Activated T-helper 2 cell treated with anti-CD3 and anti-CD28 coated beads, Interferon-gamma antibody, Interleukin-2, Interleukin-4, amounts not matched to agents 10 μg/mL and 5 μg/mL and 100 μg/mL, durations not matched to agents 14 hours and 24 hours and 36 hours (primary cell): ENCODE measurements at regions of chr10 and their contacts with region 1.

Region 1: DNA sequence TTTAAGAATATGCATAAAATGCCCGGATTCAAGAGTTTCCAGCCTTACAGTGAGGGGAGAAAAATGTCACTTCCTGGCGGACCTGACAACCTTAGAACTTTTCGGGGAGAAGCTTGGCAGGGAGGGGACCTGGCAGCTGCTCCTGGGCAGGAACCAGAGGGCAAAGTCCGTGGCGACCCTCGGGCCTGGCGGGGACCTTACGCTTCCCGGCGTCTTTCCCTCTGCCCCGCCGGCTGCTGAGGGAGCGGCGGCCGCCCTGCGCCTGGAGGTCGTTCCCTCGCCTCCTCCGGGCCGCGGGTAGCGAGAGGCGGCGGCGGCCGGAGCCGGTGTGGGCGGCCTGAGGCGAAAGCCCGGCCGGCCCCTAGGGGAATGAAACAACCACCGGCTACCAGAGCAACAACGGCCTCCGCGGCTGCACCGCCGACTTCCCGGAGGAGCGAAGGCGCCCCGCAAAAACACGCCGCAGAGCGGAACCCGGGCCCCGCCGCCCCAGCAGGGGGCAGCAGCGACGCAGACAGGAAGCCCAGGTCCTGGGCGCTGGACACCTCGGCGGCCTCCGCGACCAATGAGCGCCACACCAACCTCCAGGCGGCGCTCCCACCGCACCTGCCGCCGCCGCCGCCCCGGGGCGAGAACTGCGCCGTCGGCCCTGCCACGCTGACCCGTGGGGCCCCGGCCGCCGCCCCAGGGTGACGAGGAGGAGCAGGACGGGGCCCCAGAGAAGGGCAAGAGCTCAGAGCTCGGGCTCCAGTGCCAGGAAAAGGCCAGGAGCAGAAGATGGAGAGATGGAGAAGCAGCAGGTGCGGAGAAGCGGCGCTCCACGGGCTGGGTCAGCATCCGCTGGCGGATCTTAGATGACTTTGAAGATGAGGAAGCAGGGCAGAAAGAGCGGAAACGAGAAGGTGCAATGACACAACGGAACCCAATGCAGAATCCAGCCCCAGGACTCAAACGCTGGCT is 10.5 kb upstream of the ACSM6 start:
- DNase-seq: peak; percentile 76
- H3K4me3 Mint-ChIP-seq: peak overlapping the region; percentile 79
- H3K27ac Mint-ChIP-seq: peak overlapping the region; percentile 43
- H3K4me1 Mint-ChIP-seq: peaks cover 6% of the 10 kb centered on the region
- H3K27me3 Mint-ChIP-seq: peaks cover 40% of the 10 kb centered on the region

Region 2: DNA sequence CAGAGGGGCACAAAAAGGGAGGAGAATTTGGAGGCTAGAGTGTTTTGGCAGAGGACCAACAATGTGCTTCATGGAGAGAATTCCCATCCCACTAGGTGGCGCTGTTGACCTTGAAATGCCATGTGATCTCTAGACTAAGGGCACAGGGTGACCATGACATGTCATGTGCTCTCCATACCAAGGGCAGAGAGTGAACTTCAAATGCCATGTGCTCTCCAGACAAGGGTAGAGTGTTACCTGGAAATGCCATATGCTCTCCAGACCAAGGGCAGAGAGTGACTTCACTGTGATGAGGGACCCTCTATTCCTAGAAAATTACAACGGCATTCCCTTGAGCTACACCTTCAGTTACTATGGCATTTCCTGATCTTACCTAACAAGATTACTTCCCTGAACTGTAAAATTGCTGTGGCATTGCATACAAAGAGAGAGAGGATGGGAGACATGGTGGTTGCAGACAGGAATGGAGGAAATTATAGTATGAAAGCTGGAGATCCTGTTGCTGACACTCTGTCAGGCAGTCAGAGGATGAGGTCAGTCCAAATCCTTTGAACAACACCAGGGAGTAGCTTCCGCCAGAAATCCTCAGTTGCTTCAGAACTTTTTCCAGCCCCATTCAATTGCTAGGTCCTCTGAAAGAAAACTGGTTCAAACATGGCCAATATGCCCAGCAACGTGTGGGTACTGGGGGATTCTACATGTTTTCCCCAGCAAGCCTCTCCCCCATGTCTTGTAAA is 50.4 kb before region 1 on chr10:
- intact Hi-C with region 1: loop called (anchors 5 kb)
- DNase-seq: peak; percentile 61
- H3K4me3 Mint-ChIP-seq: no peak overlapping the region
- H3K27ac Mint-ChIP-seq: no peak overlapping the region
- H3K4me1 Mint-ChIP-seq: no peaks in the 10 kb centered on the region
- H3K27me3 Mint-ChIP-seq: peaks cover 1% of the 10 kb centered on the region

Region 3: DNA sequence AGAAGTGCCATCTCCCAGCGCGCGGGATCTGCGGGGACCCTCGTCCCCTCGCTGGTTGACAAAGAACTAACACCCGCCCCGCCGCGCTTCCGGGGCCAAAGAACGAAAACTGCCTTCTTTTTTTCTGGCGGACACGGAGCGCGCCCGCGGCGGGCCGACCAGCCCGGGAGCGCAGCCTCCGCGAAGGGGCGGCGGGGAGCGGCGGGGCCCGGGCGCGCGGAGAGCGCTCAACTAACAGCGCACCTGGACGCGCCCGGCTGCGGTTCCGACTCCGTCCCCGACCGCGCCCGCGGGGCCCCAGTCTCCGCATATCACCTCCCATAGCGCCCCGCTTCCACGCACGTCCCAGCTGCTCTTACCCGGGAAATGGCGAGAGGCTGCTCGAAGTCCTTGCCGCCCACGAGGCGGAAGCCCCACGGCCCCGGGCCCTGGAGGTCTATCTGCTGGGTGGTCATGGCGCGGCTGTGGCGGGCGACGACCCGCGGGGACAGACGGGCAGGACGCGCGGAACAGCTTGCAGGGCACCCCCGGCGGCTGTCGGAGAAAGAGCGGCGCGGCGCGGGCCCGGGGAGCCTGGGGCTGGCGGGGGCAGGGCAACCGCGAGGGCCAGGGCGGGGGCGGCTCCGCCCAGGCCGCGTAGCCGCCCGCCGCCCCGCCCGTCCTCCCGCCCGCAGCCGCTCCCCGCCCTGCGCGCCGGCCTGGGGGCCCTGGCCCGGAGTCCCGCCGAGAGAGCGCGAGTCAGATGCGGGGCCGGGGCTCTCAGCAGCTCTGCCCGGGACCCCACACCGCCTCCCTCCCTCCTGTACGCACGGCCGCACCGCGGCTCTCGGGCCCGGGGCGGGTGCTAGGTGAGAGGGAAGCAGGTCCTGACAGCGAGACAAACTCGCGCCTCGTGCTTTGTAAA is 107.2 kb after region 1 on chr10 and contains the start of gene PDLIM1:
- intact Hi-C with region 1: loop called (anchors 5 kb)
- DNase-seq: peak; percentile 59
- H3K4me3 Mint-ChIP-seq: peak within 1 kb of the TSS; percentile 78
- H3K27ac Mint-ChIP-seq: no peak within 1 kb of the TSS
- H3K4me1 Mint-ChIP-seq: peaks cover 27% of the 10 kb centered on the region
- H3K27me3 Mint-ChIP-seq: peaks cover 45% of the 10 kb centered on the region
- total RNA-seq, gene PDLIM1: 2.7 and 2.9 TPM in 2 replicates